CD4-positive, alpha-beta T cell (primary cell): ENCODE measurements at regions of chr3 and their contacts with region 1.

Region 1: GRCh38 chr3:48656061-48656840 is 6.4 kb downstream of the CELSR3 start:
- DNase-seq: peak; percentile 68 to 94 (median 80)
- ATAC-seq: peak; percentile 85
- H3K4me3 ChIP-seq: peak overlapping the region; percentile 53
- H3K4me3 Mint-ChIP-seq: peak overlapping the region; percentile 82
- H3K27ac ChIP-seq: peak overlapping the region in 1 of 2 donors; percentile 54
- H3K27ac Mint-ChIP-seq: peak overlapping the region; percentile 81
- H3K4me1 ChIP-seq: peaks cover 26% of the 10 kb centered on the region
- H3K4me1 Mint-ChIP-seq: peaks cover 16% of the 10 kb centered on the region
- H3K27me3 ChIP-seq: peaks cover 12 to 14% of the 10 kb centered on the region in 2 experiments
- H3K27me3 Mint-ChIP-seq: peaks cover 27% of the 10 kb centered on the region
- CTCF ChIP-seq: peak; percentile 73

Region 2: DNA sequence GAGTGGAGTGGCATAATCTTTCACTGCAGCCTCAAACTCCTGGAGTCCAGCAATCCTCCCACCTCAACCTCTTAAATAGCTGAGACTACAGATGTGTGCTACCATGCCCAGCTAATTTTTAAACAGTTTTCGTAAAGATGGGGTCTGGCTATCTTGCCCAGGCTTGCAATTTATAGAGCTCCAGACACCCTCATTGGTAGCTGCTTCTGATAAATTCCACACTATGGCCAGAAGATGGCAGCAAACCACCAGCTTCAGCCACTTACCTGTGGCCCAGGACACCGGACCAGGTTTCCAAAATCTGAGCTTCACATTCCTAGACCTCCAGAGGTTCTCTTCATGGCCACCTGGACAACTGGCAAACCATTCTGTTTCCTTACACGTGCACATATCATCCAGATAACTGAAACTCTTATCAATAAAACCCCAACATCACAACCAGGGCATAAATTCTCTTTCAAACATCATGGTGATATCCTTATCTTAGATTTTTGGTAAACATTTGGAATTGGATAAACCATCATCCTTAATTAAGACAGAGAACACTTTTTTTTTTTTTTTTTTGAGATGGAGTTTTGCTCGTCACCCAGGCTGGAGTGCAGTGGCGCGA is 255.3 kb before region 1 on chr3:
- CTCF ChIA-PET with region 1: no interaction called
- POLR2A ChIA-PET with region 1: no interaction called
- intact Hi-C with region 1: loop called (anchors 1 kb)
- DNase-seq: peak; percentile 45 to 88 (median 56)
- ATAC-seq: peak; percentile 82
- H3K4me3 ChIP-seq: no peak overlapping the region
- H3K4me3 Mint-ChIP-seq: no peak overlapping the region
- H3K27ac ChIP-seq: no peak overlapping the region
- H3K27ac Mint-ChIP-seq: no peak overlapping the region
- H3K4me1 ChIP-seq: no peaks in the 10 kb centered on the region
- H3K4me1 Mint-ChIP-seq: no peaks in the 10 kb centered on the region
- H3K27me3 ChIP-seq: no peaks in the 10 kb centered on the region
- H3K27me3 Mint-ChIP-seq: peaks cover 1% of the 10 kb centered on the region
- CTCF ChIP-seq: peak; percentile 93

Region 3: GRCh38 chr3:48465531-48466378 is 190.5 kb before region 1 on chr3:
- CTCF ChIA-PET with region 1: no interaction called
- POLR2A ChIA-PET with region 1: no interaction called
- intact Hi-C with region 1: loop called in 1 of 2 experiments (anchors 10 kb)
- DNase-seq: peak; percentile 62 to 89 (median 76)
- ATAC-seq: peak; percentile 96
- H3K4me3 ChIP-seq: peak overlapping the region; percentile 72
- H3K4me3 Mint-ChIP-seq: peak overlapping the region; percentile 87
- H3K27ac ChIP-seq: peak overlapping the region; percentile 94
- H3K27ac Mint-ChIP-seq: peak overlapping the region; percentile 94
- H3K4me1 ChIP-seq: peaks cover 66% of the 10 kb centered on the region
- H3K4me1 Mint-ChIP-seq: peaks cover 53% of the 10 kb centered on the region
- H3K27me3 ChIP-seq: no peaks in the 10 kb centered on the region
- H3K27me3 Mint-ChIP-seq: no peaks in the 10 kb centered on the region
- CTCF ChIP-seq: no peak

Region 4: GRCh38 chr3:48595526-48596121 is 60.6 kb before region 1 on chr3:
- CTCF ChIA-PET with region 1: no interaction called
- POLR2A ChIA-PET with region 1: no interaction called
- intact Hi-C with region 1: no loop called
- DNase-seq: peak in 2 of 14 experiments; percentile 48 to 61
- ATAC-seq: no peak
- H3K4me3 ChIP-seq: no peak overlapping the region
- H3K4me3 Mint-ChIP-seq: no peak overlapping the region
- H3K27ac ChIP-seq: no peak overlapping the region
- H3K27ac Mint-ChIP-seq: no peak overlapping the region
- H3K4me1 ChIP-seq: peaks cover 8% of the 10 kb centered on the region
- H3K4me1 Mint-ChIP-seq: peaks cover 6% of the 10 kb centered on the region
- H3K27me3 ChIP-seq: peaks cover 9 to 33% of the 10 kb centered on the region in 2 experiments
- H3K27me3 Mint-ChIP-seq: peaks cover 39% of the 10 kb centered on the region
- CTCF ChIP-seq: no peak

Region 5: DNA sequence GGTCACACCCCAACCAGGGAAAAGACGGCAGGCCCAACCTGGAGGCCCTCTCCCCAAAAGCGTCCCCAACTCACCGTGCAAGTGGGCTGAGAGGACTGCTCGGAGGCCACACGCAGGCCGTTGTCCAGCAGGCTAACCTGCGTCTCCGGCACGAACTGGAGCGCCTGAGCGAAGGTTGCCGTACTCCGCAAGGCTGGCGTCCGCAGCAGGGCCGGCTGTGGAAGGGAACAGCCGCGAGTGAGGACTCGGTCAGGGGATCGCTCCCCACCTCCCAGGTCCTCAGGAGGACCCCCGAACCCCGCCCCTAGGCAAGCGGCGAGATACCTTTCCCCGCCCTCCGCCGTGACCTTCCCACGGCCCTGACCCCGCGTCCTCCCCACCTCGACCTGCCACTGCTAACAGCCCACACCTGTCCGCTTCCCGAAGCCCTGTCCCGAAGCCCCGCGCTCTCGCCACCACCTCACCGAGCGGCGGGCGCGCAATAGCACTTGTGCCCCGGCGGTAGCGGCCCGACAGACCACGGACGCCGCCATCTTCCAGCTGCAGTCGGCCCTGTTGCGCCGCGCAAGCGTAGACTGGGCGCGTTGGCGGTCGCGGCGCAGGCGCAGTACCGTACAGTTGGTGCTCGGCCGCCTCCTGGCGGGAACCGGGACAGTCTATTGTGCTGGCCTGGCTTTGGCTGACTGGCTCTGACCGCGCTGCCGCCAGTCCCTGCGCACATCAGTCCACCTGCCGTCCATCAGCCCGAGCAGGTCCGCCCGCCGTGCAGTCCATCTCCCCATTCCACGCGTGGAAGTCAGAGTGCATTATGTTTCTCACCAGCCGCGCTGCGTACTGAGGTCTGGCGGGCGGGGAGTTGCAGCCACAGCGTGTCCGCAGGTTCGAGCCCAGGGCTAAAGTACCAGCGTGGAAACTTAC is 46.9 kb before region 1 on chr3 and contains the start of gene UQCRC1:
- CTCF ChIA-PET with region 1: no interaction called
- POLR2A ChIA-PET with region 1: no interaction called
- intact Hi-C with region 1: loop called in 1 of 2 experiments (anchors 1 kb)
- DNase-seq: peak; percentile 85 to 97 (median 91)
- ATAC-seq: peak; percentile 99
- H3K4me3 ChIP-seq: peak within 1 kb of the TSS; percentile 99
- H3K4me3 Mint-ChIP-seq: peak within 1 kb of the TSS; percentile 100
- H3K27ac ChIP-seq: peak within 1 kb of the TSS; percentile 55 to 60
- H3K27ac Mint-ChIP-seq: peak within 1 kb of the TSS; percentile 97
- H3K4me1 ChIP-seq: peaks cover 22% of the 10 kb centered on the region
- H3K4me1 Mint-ChIP-seq: peaks cover 21% of the 10 kb centered on the region
- H3K27me3 ChIP-seq: no peaks in the 10 kb centered on the region
- H3K27me3 Mint-ChIP-seq: no peaks in the 10 kb centered on the region
- CTCF ChIP-seq: peak; percentile 94
- total RNA-seq, gene UQCRC1: 74.1 to 75.5 TPM

Region 6: GRCh38 chr3:48635222-48636021 is 20.8 kb before region 1 on chr3 and contains the start of gene SLC26A6:
- CTCF ChIA-PET with region 1: interaction called, 5 read pairs
- POLR2A ChIA-PET with region 1: interaction called, 6 read pairs
- intact Hi-C with region 1: loop called (anchors 1 to 2 kb)
- DNase-seq: peak; percentile 80 to 95 (median 94)
- ATAC-seq: peak; percentile 98
- H3K4me3 ChIP-seq: peak within 1 kb of the TSS; percentile 87
- H3K4me3 Mint-ChIP-seq: peak within 1 kb of the TSS; percentile 88
- H3K27ac ChIP-seq: peak within 1 kb of the TSS in 1 of 2 donors; percentile 22
- H3K27ac Mint-ChIP-seq: no peak within 1 kb of the TSS
- H3K4me1 ChIP-seq: peaks cover 32% of the 10 kb centered on the region
- H3K4me1 Mint-ChIP-seq: peaks cover 19% of the 10 kb centered on the region
- H3K27me3 ChIP-seq: no peaks in the 10 kb centered on the region
- H3K27me3 Mint-ChIP-seq: no peaks in the 10 kb centered on the region
- CTCF ChIP-seq: no peak
- total RNA-seq, gene SLC26A6: 13.5 to 14.4 TPM

Region 7: DNA sequence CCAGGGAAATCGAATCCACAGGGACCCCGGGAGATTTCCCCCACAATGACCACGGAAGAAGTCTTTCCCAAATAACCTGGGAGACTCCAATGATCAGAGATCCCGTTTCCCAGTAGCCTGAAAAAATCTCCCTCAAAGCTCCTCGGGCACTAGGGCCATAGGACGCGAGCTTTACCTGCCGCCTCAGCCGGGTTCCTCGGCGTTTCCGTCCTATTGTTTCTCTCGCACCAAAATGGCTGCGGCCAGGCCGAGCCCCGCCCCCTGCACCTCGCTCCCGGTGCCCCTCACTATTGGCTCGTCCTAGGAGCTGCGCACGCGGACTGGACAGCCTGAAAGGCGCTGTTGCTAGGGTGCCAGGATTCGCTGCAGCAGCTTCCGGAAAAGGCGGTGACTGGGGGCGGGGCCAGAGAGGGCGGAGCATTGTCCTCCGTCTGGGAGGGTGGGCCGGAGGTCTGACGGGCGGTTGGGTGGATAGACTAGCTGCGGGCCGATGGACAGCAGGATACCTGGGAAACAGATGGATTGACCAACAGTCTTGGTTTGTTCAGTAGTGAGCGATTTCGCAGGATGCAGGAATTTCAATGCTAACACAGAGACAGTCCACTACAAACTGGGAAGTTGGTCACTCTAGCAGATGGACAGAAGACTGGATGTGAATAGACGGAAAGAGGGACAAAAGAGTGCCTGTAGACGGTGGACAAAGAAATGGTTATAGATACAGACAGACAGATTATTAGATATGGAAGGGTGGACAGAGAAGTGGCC is 60.9 kb after region 1 on chr3 and contains the start of gene IP6K2:
- CTCF ChIA-PET with region 1: interaction called, 5 read pairs
- POLR2A ChIA-PET with region 1: no interaction called
- intact Hi-C with region 1: loop called in 1 of 2 experiments (anchors 2 kb)
- DNase-seq: peak; percentile 97 to 99 (median 98)
- ATAC-seq: peak; percentile 99
- H3K4me3 ChIP-seq: peak within 1 kb of the TSS; percentile 89
- H3K4me3 Mint-ChIP-seq: peak within 1 kb of the TSS; percentile 96
- H3K27ac ChIP-seq: peak within 1 kb of the TSS; percentile 77 to 88
- H3K27ac Mint-ChIP-seq: peak within 1 kb of the TSS; percentile 88
- H3K4me1 ChIP-seq: peaks cover 38% of the 10 kb centered on the region
- H3K4me1 Mint-ChIP-seq: peaks cover 43% of the 10 kb centered on the region
- H3K27me3 ChIP-seq: no peaks in the 10 kb centered on the region
- H3K27me3 Mint-ChIP-seq: no peaks in the 10 kb centered on the region
- CTCF ChIP-seq: no peak
- total RNA-seq, gene IP6K2: 97.2 to 121 TPM

Region 8: GRCh38 chr3:48747015-48747615 is 90.9 kb after region 1 on chr3:
- CTCF ChIA-PET with region 1: no interaction called
- POLR2A ChIA-PET with region 1: no interaction called
- intact Hi-C with region 1: no loop called
- DNase-seq: no peak
- ATAC-seq: no peak
- H3K4me3 ChIP-seq: no peak overlapping the region
- H3K4me3 Mint-ChIP-seq: no peak overlapping the region
- H3K27ac ChIP-seq: no peak overlapping the region
- H3K27ac Mint-ChIP-seq: no peak overlapping the region
- H3K4me1 ChIP-seq: no peaks in the 10 kb centered on the region
- H3K4me1 Mint-ChIP-seq: no peaks in the 10 kb centered on the region
- H3K27me3 ChIP-seq: no peaks in the 10 kb centered on the region
- H3K27me3 Mint-ChIP-seq: no peaks in the 10 kb centered on the region
- CTCF ChIP-seq: no peak